GM12878 (cell line): ENCODE measurements at regions of chr7 and their contacts with region 1.

Region 1: DNA sequence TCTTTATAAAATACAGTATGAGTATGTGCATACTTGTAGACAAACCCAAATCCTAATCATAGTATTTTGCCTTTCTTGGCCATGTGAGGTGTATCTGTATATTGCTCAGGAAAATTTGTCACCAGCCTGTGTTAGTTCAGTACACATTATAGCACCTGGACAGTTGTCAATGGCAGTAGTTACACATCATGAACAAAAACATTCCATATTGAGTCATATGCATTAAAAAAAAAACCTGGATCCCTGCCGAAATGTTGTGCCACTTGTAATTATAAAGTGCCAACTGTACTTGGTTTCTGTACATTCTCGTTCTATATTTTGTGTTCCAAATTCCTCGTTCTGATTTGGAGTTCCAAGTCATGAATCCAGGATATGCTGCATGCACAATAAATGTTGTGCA is 410.4 kb downstream of the INHBA start:
- DNase-seq: no peak
- ATAC-seq: no peak
- H3K4me3 ChIP-seq: no peak overlapping the region
- H3K27ac ChIP-seq: no peak overlapping the region
- H3K4me1 ChIP-seq: no peaks in the 10 kb centered on the region
- H3K27me3 ChIP-seq: no peaks in the 10 kb centered on the region
- CTCF ChIP-seq: no peak
- EP300 ChIP-seq: no peak
- POLR2A ChIP-seq: no peak
- RAD21 ChIP-seq: no peak

Region 2: DNA sequence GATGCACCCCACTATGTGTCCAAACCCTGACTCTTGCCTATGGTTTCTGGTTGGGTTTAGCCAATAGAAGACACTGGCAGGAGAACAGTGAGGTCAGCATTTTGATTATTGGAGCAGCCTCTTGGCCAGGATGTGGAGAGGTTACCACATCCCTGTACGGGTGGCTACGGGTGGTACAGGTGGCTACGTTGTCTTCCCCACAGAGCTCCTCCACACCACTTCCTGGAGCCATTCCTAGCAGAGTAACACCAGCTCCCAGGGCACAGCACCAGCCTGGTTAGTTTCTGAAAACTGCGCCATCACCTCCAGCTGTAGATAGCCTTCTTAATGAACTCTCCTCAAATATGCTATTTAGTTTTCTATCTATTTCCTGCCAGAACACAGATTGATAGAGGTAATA is 34.8 kb before region 1 on chr7:
- CTCF ChIA-PET with region 1: no interaction called
- POLR2A ChIA-PET with region 1: no interaction called
- RAD21 ChIA-PET with region 1: no interaction called
- SMC1A ChIA-PET with region 1: no interaction called
- in situ Hi-C with region 1: no loop called
- intact Hi-C with region 1: loop called (anchors 1 kb)
- DNase-seq: no peak
- ATAC-seq: no peak
- H3K4me3 ChIP-seq: no peak overlapping the region
- H3K27ac ChIP-seq: no peak overlapping the region
- H3K4me1 ChIP-seq: no peaks in the 10 kb centered on the region
- H3K27me3 ChIP-seq: no peaks in the 10 kb centered on the region
- CTCF ChIP-seq: no peak
- EP300 ChIP-seq: no peak
- POLR2A ChIP-seq: no peak
- RAD21 ChIP-seq: no peak